Calu3 (cell line): ENCODE measurements at regions of chr11 and their contacts with region 1.

Region 1: DNA sequence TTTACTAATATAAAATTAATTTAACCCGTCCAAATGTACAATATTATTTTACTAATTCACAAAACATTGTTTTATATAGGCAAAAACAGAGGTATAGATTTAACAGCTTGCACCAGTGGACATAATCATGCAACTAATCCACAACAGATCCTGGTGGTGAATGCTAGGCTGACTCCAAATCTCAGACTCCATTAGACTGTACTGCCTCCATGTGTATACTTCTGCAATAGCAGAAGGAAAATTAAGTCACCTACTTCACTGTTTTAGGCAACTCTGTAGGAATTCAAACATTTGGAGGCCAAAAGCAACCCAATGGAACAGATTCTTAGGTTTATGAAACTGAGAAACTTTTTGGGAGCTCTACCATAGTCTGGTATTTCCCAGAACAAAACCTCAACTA is 30.0 kb upstream of the RAB39A start:
- DNase-seq: no peak
- H3K4me3 Mint-ChIP-seq: no peak overlapping the region
- H3K27ac Mint-ChIP-seq: no peak overlapping the region
- H3K4me1 Mint-ChIP-seq: no peaks in the 10 kb centered on the region
- H3K27me3 Mint-ChIP-seq: peaks cover 18% of the 10 kb centered on the region
- CTCF ChIP-seq: peak; percentile 28

Region 2: GRCh38 chr11:107573438-107573837 is 324.8 kb before region 1 on chr11:
- CTCF ChIA-PET with region 1: no interaction called
- intact Hi-C with region 1: loop called (anchors 5 kb)
- DNase-seq: no peak
- H3K4me3 Mint-ChIP-seq: no peak overlapping the region
- H3K27ac Mint-ChIP-seq: no peak overlapping the region
- H3K4me1 Mint-ChIP-seq: no peaks in the 10 kb centered on the region
- H3K27me3 Mint-ChIP-seq: no peaks in the 10 kb centered on the region
- CTCF ChIP-seq: no peak

Region 3: DNA sequence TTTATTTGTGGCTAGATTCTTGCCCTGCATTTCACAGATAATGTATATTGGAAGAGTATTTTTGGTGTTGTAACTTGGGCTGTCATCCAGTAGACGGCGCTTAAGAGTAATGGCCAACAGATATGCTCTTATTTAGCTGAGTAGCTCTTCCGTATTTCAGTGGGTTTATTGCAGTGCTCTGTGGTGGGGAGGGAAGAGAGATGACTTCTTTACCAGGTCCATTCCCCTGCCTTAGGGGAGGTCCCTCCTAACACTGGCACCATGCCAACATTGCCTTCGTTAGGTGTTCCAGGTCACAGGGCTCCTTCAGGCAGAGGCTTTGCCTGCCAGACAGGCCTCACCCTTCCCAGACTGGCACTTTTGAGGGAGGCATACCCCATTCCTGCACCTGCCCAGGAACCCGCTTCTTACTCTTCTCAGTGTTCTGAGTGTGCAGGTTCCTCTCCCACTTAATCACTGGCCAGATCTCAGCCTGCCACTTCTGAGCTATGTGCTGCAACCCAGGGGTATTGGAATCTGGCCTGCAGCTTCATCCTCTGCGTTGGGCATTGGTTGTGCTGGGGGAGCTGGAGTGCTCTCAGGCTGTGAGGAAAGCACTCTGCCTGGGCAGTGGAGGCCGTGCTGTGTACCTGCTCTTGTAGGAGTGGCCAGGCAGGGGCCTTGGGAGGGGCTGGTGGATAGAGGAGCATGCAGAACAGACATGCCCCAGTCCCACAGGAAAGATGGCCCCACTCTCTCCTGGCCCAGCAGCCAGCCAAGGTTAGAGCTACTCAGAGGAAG is 157.0 kb before region 1 on chr11:
- CTCF ChIA-PET with region 1: interaction called, 3 read pairs
- intact Hi-C with region 1: loop called (anchors 2 kb)
- DNase-seq: peak; percentile 13
- H3K4me3 Mint-ChIP-seq: no peak overlapping the region
- H3K27ac Mint-ChIP-seq: no peak overlapping the region
- H3K4me1 Mint-ChIP-seq: no peaks in the 10 kb centered on the region
- H3K27me3 Mint-ChIP-seq: peaks cover 17% of the 10 kb centered on the region
- CTCF ChIP-seq: peak; percentile 37

Region 4: GRCh38 chr11:107799218-107799859 is 98.9 kb before region 1 on chr11:
- CTCF ChIA-PET with region 1: no interaction called
- intact Hi-C with region 1: loop called (anchors 5 kb)
- DNase-seq: peak; percentile 68
- H3K4me3 Mint-ChIP-seq: no peak overlapping the region
- H3K27ac Mint-ChIP-seq: no peak overlapping the region
- H3K4me1 Mint-ChIP-seq: no peaks in the 10 kb centered on the region
- H3K27me3 Mint-ChIP-seq: no peaks in the 10 kb centered on the region
- CTCF ChIP-seq: peak; percentile 68

Region 5: DNA sequence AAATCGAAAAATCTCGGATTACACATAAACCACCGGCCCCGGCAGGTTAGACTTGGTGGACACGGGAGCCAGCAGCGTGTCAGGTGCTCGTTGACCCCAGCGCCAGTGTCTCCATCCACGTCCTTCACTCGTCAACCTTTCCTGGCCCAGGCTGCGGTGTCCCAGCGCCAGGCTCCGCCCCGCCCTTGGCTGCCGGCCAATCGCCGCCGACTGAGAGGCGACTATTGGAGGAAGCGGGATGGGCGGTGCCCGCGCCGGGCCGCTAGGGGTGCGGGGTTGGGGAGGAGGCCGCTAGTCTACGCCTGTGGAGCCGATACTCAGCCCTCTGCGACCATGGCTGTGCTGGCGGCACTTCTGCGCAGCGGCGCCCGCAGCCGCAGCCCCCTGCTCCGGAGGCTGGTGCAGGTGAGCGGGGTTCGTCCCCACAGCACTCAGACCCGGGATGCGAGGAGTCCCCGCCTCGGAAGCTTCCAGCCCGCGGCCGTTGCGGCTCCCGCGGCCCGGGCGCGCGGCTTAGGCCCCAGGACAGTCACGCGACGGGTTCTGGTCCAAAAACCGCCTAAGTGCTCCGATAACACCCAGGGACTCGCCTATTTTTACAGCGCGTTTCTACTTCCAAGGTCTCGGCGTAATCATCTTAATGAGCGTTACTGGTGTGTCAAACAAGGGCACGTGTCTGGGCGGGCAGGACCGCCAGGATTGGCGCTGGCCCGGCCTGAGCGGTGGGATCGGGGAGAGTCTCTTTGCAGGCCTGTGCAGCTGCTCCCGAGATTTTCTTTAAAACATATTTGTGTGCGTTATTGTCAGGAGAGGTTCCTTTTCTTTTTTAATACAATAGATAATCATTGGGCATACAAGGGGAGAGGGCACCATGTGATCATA is 223.2 kb after region 1 on chr11 and contains the start of gene ACAT1:
- CTCF ChIA-PET with region 1: no interaction called
- intact Hi-C with region 1: no loop called
- DNase-seq: peak; percentile 96
- H3K4me3 Mint-ChIP-seq: peak within 1 kb of the TSS; percentile 82
- H3K27ac Mint-ChIP-seq: peak within 1 kb of the TSS; percentile 38
- H3K4me1 Mint-ChIP-seq: peaks cover 19% of the 10 kb centered on the region
- H3K27me3 Mint-ChIP-seq: no peaks in the 10 kb centered on the region
- CTCF ChIP-seq: no peak
- total RNA-seq, gene ACAT1: 37.2 and 38.3 TPM in 2 replicates

Region 6: DNA sequence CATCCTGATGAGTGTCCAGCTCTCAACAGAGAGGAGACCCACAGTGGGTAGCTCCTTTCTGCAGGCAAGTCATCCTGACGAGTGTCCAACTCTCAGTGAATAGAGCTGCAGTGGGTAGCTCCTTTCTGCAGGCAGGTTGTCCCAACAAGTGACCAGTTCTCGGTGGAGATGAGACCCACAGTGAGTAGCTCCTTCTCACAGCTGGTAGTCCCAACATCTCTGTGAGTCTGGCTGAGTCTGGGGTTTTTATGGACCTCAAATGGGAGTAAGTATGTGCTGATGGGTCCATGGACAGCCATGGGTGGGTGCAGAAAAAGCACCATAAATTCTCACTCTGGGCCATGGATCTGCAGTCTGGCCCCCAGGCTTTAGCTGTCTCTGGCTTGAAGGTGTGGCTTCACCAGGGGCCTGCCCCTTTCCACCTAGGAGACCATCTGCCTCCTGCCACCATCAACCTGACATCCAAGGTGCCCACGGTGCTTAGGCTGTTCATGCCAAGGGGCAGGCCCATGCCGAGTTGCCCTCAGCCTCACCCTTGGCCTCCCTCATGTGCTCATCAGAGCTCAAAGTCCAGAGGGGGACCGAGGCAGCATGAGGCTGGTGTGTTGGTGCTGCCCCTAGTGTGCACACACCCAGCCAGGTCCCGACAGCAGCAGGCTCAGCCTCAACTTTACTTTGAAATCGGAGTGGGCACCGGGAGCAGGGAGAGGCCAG is 308.9 kb after region 1 on chr11:
- CTCF ChIA-PET with region 1: no interaction called
- intact Hi-C with region 1: no loop called
- DNase-seq: no peak
- H3K4me3 Mint-ChIP-seq: no peak overlapping the region
- H3K27ac Mint-ChIP-seq: no peak overlapping the region
- H3K4me1 Mint-ChIP-seq: no peaks in the 10 kb centered on the region
- H3K27me3 Mint-ChIP-seq: no peaks in the 10 kb centered on the region
- CTCF ChIP-seq: no peak